Calu3 (cell line): ENCODE measurements at regions of chr22 and their contacts with region 1.

Region 1: DNA sequence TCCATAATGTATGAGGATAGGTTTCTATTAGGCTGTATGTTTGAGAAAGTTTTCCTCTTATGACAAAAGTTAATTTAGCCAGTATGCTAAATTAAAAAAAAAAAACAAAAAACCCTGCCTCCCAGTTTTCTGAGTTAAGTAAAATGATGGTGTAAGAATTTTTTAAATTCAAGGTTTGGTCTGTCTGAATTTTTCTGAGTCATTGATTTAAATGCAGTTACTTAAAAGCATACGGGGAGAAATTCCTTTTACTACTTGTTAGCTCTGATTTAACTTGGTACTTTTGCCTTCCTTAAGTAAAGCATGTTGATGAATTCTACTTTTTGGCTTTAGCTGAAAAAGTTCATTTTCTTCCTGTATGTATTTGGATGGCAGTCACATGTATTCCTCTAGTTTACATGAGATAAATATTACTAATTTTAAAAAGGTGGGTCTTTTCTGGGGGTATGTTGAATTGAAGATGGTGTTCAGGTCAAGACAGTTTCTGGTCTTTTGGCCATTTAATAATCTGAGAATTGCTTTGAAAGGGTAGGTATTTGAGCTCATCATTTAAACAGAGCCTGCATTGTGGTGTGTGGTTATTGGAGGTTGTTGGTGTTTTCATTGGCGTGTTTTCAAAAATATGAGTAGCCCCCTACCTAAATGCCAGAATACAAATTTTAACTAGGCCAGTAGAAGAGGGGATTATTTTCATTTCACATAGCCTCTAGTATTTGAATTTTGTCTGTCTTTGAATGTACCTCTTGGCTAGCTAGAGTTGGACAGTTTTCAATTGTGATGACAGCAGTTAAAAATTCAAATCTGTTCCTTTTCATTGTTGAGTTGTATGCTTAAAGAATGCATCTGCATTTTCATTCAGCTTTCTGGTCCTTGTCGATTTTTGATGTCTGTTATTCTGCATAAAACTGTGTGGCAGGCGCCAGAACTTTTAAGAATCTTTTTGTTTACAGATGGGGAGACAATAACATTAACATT is 64.7 kb downstream of the MTMR3 start:
- DNase-seq: no peak
- H3K4me3 Mint-ChIP-seq: no peak overlapping the region
- H3K27ac Mint-ChIP-seq: no peak overlapping the region
- H3K4me1 Mint-ChIP-seq: peaks cover 25% of the 10 kb centered on the region
- H3K27me3 Mint-ChIP-seq: no peaks in the 10 kb centered on the region
- CTCF ChIP-seq: no peak

Region 2: GRCh38 chr22:29907815-29908515 is 39.7 kb before region 1 on chr22:
- CTCF ChIA-PET with region 1: interaction called, 3 read pairs
- intact Hi-C with region 1: loop called (anchors 5 kb)
- DNase-seq: peak; percentile 84
- H3K4me3 Mint-ChIP-seq: peak overlapping the region; percentile 65
- H3K27ac Mint-ChIP-seq: peak overlapping the region; percentile 89
- H3K4me1 Mint-ChIP-seq: peaks cover 74% of the 10 kb centered on the region
- H3K27me3 Mint-ChIP-seq: no peaks in the 10 kb centered on the region
- CTCF ChIP-seq: no peak

Region 3: DNA sequence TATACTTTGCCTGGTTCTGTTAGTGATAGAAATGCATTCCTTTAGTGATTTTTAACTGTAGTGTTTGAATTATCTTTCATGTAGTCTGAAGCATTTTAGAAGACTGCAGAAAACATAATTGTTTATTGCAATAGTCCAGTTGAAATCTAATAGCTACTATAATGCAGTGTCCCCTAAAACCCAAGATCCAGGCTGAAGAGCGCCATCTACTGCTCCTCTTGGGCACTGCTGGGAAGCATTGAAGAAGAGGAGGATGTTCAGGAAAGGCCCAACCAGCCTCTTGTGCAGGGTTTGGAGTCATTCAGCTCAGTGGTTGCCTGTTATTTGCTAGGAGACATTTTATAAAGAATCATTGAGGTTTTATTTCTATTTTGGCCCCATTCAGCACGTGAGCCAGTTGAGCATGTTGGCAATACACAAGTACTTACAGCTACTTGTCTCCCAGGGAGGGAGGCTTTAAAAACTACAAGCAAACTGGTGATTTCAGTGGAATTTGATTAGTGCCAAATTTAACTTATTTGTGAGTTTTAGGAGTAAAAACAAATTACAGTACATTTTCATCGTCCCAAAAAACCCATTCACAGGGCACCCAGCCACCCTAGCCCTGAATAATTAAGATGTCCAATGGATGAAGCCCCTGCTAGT is 57.6 kb after region 1 on chr22:
- CTCF ChIA-PET with region 1: no interaction called
- intact Hi-C with region 1: no loop called
- DNase-seq: peak; percentile 75
- H3K4me3 Mint-ChIP-seq: no peak overlapping the region
- H3K27ac Mint-ChIP-seq: no peak overlapping the region
- H3K4me1 Mint-ChIP-seq: peaks cover 18% of the 10 kb centered on the region
- H3K27me3 Mint-ChIP-seq: no peaks in the 10 kb centered on the region
- CTCF ChIP-seq: peak; percentile 95